ENCODE measurements at regions of chr17 and their contacts with region 1.

Region 1: DNA sequence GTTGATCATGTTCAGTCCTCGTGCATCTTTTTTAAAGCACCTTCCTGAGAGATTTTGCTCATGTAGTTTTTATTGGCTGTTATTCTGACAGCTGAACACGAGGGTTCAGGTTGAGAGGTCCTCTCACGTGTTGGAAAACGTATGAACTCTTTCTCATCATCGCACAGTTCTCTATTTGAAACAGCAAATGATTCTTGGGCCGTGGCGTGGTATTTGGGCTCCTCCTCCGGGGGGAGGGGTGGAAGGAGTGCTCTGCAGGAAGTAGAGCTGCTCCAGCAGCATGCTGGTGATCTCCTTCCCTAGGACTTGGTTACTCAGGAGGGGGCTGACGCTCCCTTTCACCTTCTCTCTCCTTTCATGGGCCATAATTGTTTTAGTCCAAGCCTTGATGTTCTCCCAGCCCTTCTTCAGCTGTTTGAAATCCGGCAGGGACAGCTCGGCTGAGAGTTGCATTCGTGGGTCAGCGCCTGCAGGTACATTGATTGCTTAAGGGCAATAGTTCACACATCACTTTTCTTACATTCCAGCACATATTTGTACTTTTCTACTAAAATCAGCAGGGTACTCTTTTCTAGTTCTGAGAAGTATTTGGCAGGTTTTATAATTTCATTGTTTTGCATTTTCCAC is 70.5 kb downstream of the KSR1 start:
- DNase-seq: peak in 3 of 4 donors; percentile 66 to 84 (median 81)
- ATAC-seq: peak; percentile 61
- H3K4me3 ChIP-seq: peak overlapping the region in 1 of 2 donors; percentile 1
- H3K27ac ChIP-seq: peak overlapping the region in 1 of 2 donors; percentile 53
- H3K4me1 ChIP-seq: peaks cover 31 to 62% of the 10 kb centered on the region in 2 donors
- H3K27me3 ChIP-seq: no peaks in the 10 kb centered on the region
- CTCF ChIP-seq: no peak

Region 2: DNA sequence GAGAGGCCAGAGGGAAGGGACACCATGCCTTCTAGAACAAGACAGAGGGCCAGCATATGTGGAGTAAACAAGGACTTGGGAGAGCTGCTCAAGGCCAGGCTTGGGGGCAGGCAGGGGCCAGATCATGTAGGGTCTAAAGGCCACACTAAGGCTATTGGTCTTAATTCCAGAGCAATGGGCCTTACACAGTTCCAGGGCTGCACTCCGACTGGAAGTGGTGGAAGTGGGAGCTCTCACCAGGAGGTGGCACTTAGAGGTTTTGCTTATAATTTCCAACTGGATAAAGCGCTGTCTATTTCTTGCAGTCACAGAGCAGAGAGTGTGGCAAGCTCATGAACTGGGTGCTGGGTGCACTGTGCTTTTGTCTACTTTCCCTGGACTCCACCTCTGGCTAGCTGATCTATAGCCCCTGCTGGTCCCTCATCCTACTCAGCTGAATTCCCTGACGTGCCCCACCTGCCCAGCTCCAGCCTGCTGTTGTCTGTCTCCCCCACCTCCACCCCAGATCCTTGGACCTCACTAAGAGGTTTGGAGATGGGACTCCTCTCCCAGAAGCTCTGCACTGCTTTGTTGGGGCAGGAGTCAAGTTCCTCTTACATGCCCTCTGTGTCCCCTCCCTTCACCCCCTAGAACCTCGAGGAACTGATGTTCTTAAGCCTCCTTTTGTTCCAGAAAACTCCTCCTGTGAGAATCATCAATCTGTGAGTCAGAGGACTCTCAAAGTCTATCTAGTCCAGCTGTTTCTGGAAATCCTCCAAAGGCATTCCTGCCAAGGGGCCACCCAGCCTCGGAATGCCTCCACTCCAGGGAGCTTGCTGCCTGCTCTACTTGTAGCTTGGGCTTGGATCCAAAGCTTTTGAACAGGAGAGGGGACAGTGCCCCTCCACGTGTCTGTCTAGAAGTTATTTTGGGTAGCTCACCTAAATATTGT is 118.5 kb before region 1 on chr17:
- intact Hi-C with region 1: no loop called
- DNase-seq: no peak
- ATAC-seq: peak; percentile 40
- H3K4me3 ChIP-seq: no peak overlapping the region
- H3K27ac ChIP-seq: no peak overlapping the region
- H3K4me1 ChIP-seq: peaks cover 0 to 10% of the 10 kb centered on the region in 2 donors
- H3K27me3 ChIP-seq: no peaks in the 10 kb centered on the region
- CTCF ChIP-seq: no peak

Region 3: GRCh38 chr17:27438348-27438998 is 88.2 kb before region 1 on chr17:
- intact Hi-C with region 1: no loop called
- DNase-seq: no peak
- ATAC-seq: no peak
- H3K4me3 ChIP-seq: no peak overlapping the region
- H3K27ac ChIP-seq: no peak overlapping the region
- H3K4me1 ChIP-seq: no peaks in the 10 kb centered on the region
- H3K27me3 ChIP-seq: no peaks in the 10 kb centered on the region
- CTCF ChIP-seq: no peak

Region 4: DNA sequence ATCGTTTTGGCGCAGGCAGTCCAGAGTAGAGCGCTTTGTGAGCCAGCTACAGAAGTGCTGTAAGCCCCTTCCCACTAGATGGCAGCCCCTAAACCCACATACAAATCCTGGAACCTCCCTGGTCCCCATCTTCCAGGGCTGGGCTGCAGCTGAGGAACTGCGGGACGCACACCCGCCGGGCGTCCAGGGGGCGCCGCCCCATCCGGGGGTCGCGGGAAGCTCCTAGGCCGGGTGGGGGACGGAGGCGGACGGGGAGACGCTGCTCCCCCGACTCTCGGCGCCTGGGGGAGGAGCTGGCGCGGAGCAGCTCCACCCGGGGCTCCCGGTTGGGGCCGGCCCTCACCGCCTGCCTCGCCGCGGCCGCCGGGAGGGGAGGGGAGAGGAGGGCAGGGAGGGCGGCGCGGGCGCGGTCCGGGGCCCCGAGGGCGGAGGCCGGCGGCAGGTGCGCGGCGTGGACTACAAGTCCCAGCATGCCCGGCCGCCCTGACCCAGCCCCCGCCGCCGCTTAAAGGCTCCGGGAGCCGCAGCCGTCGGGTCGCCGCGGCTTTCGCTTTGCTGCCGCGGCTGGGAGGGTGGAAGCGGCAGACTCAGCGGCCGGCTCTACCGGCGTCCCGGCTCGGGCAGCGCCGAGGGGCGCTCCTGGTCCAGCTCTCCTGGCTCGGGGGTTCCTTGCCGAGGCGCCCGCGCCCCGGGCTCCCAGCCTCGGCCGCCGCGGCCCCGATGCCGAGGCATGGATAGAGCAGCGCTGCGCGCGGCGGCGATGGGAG is 70.6 kb before region 1 on chr17 and contains the start of gene KSR1:
- intact Hi-C with region 1: no loop called
- DNase-seq: peak; percentile 82 to 97 (median 89)
- ATAC-seq: peak; percentile 97
- H3K4me3 ChIP-seq: peak within 1 kb of the TSS; percentile 74 to 87
- H3K27ac ChIP-seq: peak within 1 kb of the TSS; percentile 65 to 77
- H3K4me1 ChIP-seq: peaks cover 14 to 40% of the 10 kb centered on the region in 2 donors
- H3K27me3 ChIP-seq: no peaks in the 10 kb centered on the region
- CTCF ChIP-seq: no peak
- polyA plus RNA-seq, gene KSR1: 55.2 to 70.0 (median 64.7) TPM

Region 5: DNA sequence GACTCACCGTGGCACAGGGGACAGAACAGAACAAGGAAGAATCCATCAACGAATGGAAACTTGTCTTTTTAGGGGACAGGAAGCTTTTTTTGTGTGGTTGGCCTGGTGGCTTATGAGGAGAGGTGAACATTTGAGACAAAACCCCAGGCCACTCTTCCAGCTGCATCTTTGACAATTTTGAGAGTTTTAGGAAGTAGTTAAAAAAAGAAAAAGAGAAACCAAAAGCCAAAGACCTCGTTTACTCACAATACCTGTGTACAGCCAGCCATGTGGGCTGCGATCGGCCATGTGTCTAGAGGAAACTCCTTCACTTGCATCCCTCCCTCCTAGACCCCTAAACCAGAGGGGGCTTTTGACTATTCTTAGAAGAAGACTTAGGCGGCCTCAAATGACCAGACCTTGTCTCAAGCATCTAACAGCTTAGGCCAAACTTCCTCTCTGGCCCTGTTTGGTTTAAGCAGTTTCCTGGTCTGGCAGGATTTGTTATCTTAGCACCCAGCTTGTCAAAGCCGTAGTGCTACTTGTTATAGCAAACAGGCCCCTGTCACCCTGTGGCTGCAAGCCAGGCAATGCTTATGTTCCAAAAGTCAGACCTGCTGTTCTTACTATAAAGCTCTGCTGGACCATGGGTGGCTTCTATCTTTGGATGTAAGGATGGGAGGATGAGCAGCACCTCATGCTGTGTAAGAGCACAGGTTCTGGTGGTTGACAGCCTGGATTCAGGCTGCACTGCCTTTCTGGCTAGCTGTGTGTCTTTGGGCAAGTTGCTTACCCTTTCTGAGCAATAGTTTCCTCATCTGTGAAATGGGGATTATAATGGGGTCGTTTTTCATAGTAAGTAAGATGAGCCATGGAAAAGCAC is 52.7 kb before region 1 on chr17:
- intact Hi-C with region 1: loop called in 1 of 2 experiments (anchors 10 kb)
- DNase-seq: peak in 1 of 4 donors; percentile 67
- ATAC-seq: peak; percentile 60
- H3K4me3 ChIP-seq: no peak overlapping the region
- H3K27ac ChIP-seq: peak overlapping the region in 1 of 2 donors; percentile 70
- H3K4me1 ChIP-seq: peaks cover 3 to 62% of the 10 kb centered on the region in 2 donors
- H3K27me3 ChIP-seq: no peaks in the 10 kb centered on the region
- CTCF ChIP-seq: no peak

Region 6: GRCh38 chr17:27586203-27586721 is 59.5 kb after region 1 on chr17:
- intact Hi-C with region 1: loop called in 1 of 2 experiments (anchors 10 kb)
- DNase-seq: no peak
- ATAC-seq: peak; percentile 27
- H3K4me3 ChIP-seq: no peak overlapping the region
- H3K27ac ChIP-seq: no peak overlapping the region
- H3K4me1 ChIP-seq: peaks cover 0 to 6% of the 10 kb centered on the region in 2 donors
- H3K27me3 ChIP-seq: no peaks in the 10 kb centered on the region
- CTCF ChIP-seq: no peak

Measured in left lung (tissue), 14 donors.